ENCODE measurements at regions of chr17 and their contacts with region 1.

Region 1: GRCh38 chr17:49997791-49998703 is 3.0 kb upstream of the DLX3 start:
- DNase-seq: peak; percentile 77 to 80
- H3K4me3 ChIP-seq: no peak overlapping the region
- H3K27ac ChIP-seq: no peak overlapping the region
- H3K4me1 ChIP-seq: peaks cover 27% of the 10 kb centered on the region
- H3K27me3 ChIP-seq: peaks cover 7% of the 10 kb centered on the region; the same call in 1 of the 2 replicates
- CTCF ChIP-seq: peak; percentile 97

Region 2: GRCh38 chr17:49567871-49568694 is 430.0 kb before region 1 on chr17:
- CTCF ChIA-PET with region 1: interaction called, 5 read pairs
- POLR2A ChIA-PET with region 1: no interaction called
- intact Hi-C with region 1: loop called (anchors 2 kb)
- DNase-seq: peak; percentile 69 to 88
- H3K4me3 ChIP-seq: peak overlapping the region; percentile 38; the same call in 1 of the 2 replicates
- H3K27ac ChIP-seq: no peak overlapping the region
- H3K4me1 ChIP-seq: 0 out of 2 replicates have a peak, but pooled peaks cover 6% of the 10 kb centered on the region
- H3K27me3 ChIP-seq: peaks cover 28% of the 10 kb centered on the region
- CTCF ChIP-seq: peak; percentile 99

Region 3: GRCh38 chr17:49851387-49852291 is 146.4 kb before region 1 on chr17:
- CTCF ChIA-PET with region 1: interaction called, 17 read pairs
- POLR2A ChIA-PET with region 1: no interaction called
- intact Hi-C with region 1: no loop called
- DNase-seq: peak in 1 of 2 experiments; percentile 66
- H3K4me3 ChIP-seq: peak overlapping the region; percentile 56; the same call in 1 of the 2 replicates
- H3K27ac ChIP-seq: no peak overlapping the region
- H3K4me1 ChIP-seq: peaks cover 5% of the 10 kb centered on the region
- H3K27me3 ChIP-seq: peaks cover 50% of the 10 kb centered on the region
- CTCF ChIP-seq: peak; percentile 74

Region 4: GRCh38 chr17:49880291-49881053 is 117.6 kb before region 1 on chr17:
- CTCF ChIA-PET with region 1: interaction called, 4 read pairs
- POLR2A ChIA-PET with region 1: interaction called, 50 read pairs
- intact Hi-C with region 1: loop called (anchors 1 kb)
- DNase-seq: peak; percentile 65 to 88
- H3K4me3 ChIP-seq: peak overlapping the region; percentile 23; the same call in 1 of the 2 replicates
- H3K27ac ChIP-seq: no peak overlapping the region
- H3K4me1 ChIP-seq: peaks cover 19% of the 10 kb centered on the region
- H3K27me3 ChIP-seq: no peaks in the 10 kb centered on the region
- CTCF ChIP-seq: peak; percentile 99

Region 5: GRCh38 chr17:49952209-49952911 is 45.7 kb before region 1 on chr17:
- CTCF ChIA-PET with region 1: interaction called, 22 read pairs
- POLR2A ChIA-PET with region 1: no interaction called
- intact Hi-C with region 1: loop called (anchors 1 kb)
- DNase-seq: peak; percentile 70 to 83
- H3K4me3 ChIP-seq: no peak overlapping the region
- H3K27ac ChIP-seq: no peak overlapping the region
- H3K4me1 ChIP-seq: no peaks in the 10 kb centered on the region
- H3K27me3 ChIP-seq: peaks cover 3% of the 10 kb centered on the region; the same call in 1 of the 2 replicates
- CTCF ChIP-seq: peak; percentile 97

Region 6: DNA sequence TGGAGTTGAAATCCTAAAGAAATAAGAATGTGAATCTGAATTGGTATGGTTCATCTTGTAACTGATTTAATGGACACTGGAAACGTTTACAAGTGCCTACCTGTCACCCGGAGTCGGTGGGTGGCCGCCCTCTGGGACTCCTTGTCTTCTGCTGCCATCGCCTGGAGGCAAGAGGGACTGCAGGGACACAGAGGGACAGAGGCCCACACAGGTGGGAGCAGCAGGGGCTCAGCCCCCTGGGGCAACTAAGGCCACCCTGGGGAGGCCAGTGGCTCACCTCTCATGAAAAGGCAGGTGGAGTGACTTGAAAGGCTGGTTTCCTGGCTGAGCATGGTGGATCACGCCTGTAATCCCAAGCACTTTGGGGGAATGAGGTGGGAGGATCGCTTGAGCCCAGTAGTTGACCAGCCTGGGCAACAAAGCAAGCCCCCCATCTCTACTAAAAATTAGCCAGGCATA is 299.4 kb after region 1 on chr17:
- CTCF ChIA-PET with region 1: no interaction called
- POLR2A ChIA-PET with region 1: no interaction called
- intact Hi-C with region 1: loop called (anchors 5 kb)
- DNase-seq: peak; percentile 47 to 81
- H3K4me3 ChIP-seq: no peak overlapping the region
- H3K27ac ChIP-seq: no peak overlapping the region
- H3K4me1 ChIP-seq: no peaks in the 10 kb centered on the region
- H3K27me3 ChIP-seq: no peaks in the 10 kb centered on the region
- CTCF ChIP-seq: peak; percentile 94